Testis (tissue), 5 donors: ENCODE measurements at regions of chr18 and their contacts with region 1.

Region 1: DNA sequence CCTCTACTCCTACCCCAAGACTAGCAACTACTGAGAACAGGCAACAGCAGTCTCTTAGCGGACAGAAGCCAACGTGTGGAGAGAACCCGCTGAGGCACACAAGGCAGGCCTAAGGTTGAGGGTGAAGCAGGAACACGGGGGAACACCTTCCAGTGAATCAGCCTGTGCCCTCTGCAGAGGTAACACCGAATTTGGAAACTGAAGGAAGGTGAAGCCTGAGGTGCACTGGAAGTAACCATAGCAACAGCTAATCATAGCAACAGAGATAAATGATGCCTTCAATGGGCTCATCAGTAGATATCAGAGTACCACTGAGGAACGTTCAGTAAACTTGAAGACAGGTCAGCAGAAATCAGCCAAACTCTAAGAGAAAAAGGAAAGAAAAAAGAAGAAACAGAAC is 43.3 kb downstream of the OSBPL1A start:
- DNase-seq: no peak
- H3K4me3 ChIP-seq: no peak overlapping the region
- H3K27ac ChIP-seq: no peak overlapping the region
- H3K4me1 ChIP-seq: no peaks in the 10 kb centered on the region
- H3K27me3 ChIP-seq: no peaks in the 10 kb centered on the region
- CTCF ChIP-seq: no peak
- POLR2A ChIP-seq: no peak

Region 2: DNA sequence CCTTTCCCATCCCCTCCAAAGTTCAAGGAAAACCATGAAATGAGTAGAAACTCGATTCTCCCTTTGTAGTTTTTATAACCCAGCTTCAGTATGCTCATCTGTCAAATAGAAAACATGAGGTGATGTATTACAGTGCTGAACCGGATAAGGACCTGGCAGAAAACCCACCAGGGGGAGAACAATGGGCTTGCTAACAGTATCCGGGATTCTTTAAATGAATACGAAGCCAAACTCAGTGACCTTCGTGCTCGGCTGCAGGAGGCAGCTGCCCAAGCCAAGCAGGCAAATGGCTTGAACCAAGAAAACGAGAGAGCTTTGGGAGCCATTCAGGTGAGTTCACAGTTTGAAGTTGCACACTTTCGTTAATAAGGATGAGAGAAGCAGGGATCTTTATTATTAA is 453.3 kb before region 1 on chr18:
- intact Hi-C with region 1: no loop called
- DNase-seq: no peak
- H3K4me3 ChIP-seq: no peak overlapping the region
- H3K27ac ChIP-seq: no peak overlapping the region
- H3K4me1 ChIP-seq: no peaks in the 10 kb centered on the region
- H3K27me3 ChIP-seq: no peaks in the 10 kb centered on the region
- CTCF ChIP-seq: no peak
- POLR2A ChIP-seq: no peak

Region 3: DNA sequence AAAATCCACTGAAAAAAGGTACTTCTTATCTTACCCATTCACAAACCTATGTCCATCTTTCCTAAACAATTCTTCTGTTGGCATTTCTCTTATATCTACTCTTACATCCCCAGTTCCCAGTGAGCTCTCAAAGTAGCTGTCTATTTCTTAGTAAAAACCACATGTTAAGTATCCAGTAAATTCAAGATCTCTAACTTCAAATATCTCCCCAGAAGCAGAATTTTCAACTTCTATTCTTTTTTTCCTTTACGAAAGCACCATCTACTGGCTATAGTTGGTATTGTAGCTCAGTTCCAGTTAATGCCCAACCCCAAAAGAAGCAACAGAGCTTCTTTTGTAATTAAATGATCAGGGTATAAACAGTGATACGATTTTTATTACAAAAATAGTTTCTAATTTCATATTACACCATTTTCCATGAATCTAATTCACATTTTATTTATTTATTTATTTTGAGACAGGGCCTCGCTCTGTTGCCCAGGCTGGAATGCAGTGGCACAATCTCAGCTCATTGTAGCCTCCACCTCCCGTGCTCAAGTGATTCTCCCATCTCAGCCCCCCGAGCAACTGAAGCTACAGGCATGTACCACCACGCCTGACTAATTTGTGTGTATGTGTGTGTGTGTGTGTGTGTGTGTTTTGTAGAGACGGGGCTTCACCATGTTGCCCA is 134.7 kb after region 1 on chr18:
- intact Hi-C with region 1: loop called (anchors 10 kb)
- DNase-seq: no peak
- H3K4me3 ChIP-seq: no peak overlapping the region
- H3K27ac ChIP-seq: no peak overlapping the region
- H3K4me1 ChIP-seq: no peaks in the 10 kb centered on the region
- H3K27me3 ChIP-seq: no peaks in the 10 kb centered on the region
- CTCF ChIP-seq: peak; percentile 62 to 89 (median 66)
- POLR2A ChIP-seq: no peak

Region 4: GRCh38 chr18:24846138-24846537 is 491.9 kb after region 1 on chr18:
- intact Hi-C with region 1: no loop called
- DNase-seq: no peak
- H3K4me3 ChIP-seq: no peak overlapping the region
- H3K27ac ChIP-seq: no peak overlapping the region
- H3K4me1 ChIP-seq: no peaks in the 10 kb centered on the region
- H3K27me3 ChIP-seq: no peaks in the 10 kb centered on the region
- CTCF ChIP-seq: no peak
- POLR2A ChIP-seq: no peak

Region 5: DNA sequence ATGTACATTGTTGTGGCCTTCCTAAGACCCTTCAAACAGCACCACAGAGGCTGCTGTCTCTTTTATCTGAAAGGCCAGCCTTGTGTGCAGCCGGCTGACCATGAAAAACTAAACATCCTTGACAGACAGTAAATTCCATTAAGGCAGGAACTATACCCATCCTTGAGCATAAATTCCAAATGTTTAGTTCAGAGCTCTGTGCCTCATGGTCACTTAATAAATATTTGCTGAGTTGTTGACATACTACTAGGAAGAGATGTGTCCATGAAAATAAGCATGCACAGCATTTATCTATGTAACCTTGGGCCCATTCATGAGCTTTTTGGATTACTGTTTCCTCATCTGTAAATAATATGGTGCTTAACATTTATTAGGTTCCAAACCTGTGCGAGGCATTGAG is 531.0 kb after region 1 on chr18:
- intact Hi-C with region 1: no loop called
- DNase-seq: no peak
- H3K4me3 ChIP-seq: no peak overlapping the region
- H3K27ac ChIP-seq: no peak overlapping the region
- H3K4me1 ChIP-seq: no peaks in the 10 kb centered on the region
- H3K27me3 ChIP-seq: no peaks in the 10 kb centered on the region
- CTCF ChIP-seq: no peak
- POLR2A ChIP-seq: no peak